ENCODE measurements at regions of chr2 and their contacts with region 1.

Region 1: DNA sequence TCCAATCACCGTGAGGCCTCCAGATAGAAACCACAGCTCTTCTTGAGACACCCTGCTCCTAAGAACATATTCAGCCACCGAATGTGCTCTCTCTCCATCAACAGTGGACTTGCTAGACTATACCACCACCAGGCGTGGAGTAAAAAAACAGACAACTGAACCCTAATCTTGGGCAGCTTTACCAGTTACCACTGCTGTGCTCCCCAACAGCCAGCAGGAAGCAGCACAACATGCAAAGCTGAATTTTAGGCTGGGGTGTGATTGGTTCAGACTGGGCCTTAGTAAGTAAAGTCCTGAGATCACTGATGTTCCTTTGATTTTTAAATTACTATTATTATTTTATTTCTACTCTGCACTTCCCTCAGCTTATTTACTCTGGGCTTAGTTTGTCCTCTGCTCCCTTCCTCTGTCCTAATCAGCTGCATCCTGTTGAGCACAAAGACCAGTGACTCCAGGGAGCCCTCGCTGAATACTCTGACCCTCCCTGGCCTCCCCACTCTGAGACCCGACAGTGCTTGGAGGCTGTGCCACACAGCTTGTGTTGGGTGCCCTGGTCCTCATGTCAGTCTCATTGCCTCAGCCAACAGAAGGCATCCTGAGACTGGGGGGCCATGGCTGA is 21.9 kb downstream of the MRPL35 start:
- DNase-seq: peak; percentile 73
- ATAC-seq: peak; percentile 68
- H3K4me3 Mint-ChIP-seq: no peak overlapping the region
- H3K27ac Mint-ChIP-seq: no peak overlapping the region
- H3K4me1 Mint-ChIP-seq: peaks cover 23% of the 10 kb centered on the region
- H3K27me3 Mint-ChIP-seq: no peaks in the 10 kb centered on the region

Region 2: GRCh38 chr2:86140969-86141392 is 80.2 kb before region 1 on chr2:
- CTCF ChIA-PET with region 1: no interaction called
- DNase-seq: no peak
- ATAC-seq: no peak
- H3K4me3 Mint-ChIP-seq: no peak overlapping the region
- H3K27ac Mint-ChIP-seq: no peak overlapping the region
- H3K4me1 Mint-ChIP-seq: peaks cover 6% of the 10 kb centered on the region
- H3K27me3 Mint-ChIP-seq: no peaks in the 10 kb centered on the region

Region 3: DNA sequence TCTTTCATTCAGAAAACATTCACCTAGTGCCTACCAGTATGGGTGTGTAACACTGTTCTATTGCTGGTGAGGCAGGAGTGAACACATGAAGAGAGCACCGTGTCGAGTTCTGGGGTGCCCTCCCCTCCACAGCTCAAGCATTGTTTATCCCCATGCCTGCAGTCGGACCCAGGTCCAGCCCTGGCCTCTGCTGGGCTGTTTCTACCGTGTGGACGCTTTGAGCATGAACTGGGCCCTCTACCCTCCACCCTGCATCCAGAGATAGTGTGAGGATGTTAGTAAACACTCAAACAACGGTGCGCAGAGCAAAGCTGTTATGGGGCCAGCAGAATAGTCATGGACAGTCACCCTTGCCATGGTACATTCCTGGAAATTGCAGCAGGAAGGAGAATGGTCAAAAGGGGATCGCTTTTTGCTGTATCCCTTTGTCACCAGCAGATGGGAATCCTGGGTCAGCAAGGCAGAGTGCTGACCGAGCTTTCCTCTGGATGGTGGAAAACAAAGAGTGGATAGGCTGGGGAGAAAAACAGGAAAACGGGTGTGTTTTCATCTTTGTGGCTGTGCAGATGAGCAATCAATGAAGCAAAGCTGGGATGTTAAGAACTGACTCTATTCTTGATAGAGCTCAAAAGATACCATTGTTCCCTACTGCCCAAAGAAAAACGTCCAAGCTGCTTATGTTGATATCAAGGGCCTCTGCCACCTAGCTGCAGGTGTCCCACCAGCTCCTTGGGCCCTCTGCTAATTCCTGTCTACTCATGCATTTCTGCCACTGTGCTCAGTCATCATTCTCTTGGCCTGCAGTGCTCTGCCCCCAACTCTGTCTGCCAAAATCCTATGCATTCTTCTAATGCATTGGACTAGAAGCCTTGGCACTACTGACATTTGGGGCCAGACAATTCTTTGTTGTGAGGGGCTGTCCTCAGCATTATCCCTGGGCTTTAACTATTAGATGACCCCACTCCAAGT is 77.5 kb after region 1 on chr2:
- CTCF ChIA-PET with region 1: interaction called, 11 read pairs
- DNase-seq: no peak
- ATAC-seq: no peak
- H3K4me3 Mint-ChIP-seq: no peak overlapping the region
- H3K27ac Mint-ChIP-seq: no peak overlapping the region
- H3K4me1 Mint-ChIP-seq: no peaks in the 10 kb centered on the region
- H3K27me3 Mint-ChIP-seq: peaks cover 65% of the 10 kb centered on the region

Region 4: GRCh38 chr2:86368161-86368824 is 147.1 kb after region 1 on chr2:
- CTCF ChIA-PET with region 1: interaction called, 22 read pairs
- DNase-seq: peak; percentile 57
- ATAC-seq: peak; percentile 73
- H3K4me3 Mint-ChIP-seq: no peak overlapping the region
- H3K27ac Mint-ChIP-seq: no peak overlapping the region
- H3K4me1 Mint-ChIP-seq: peaks cover 18% of the 10 kb centered on the region
- H3K27me3 Mint-ChIP-seq: peaks cover 2% of the 10 kb centered on the region